ENCODE measurements at regions of chr12 and their contacts with region 1.

Region 1: GRCh38 chr12:48924617-48925303 is 532 bp downstream of the FKBP11 start:
- DNase-seq: peak; percentile 40 to 70 (median 59)
- H3K4me3 ChIP-seq: peak overlapping the region; percentile 59
- H3K27ac ChIP-seq: no peak overlapping the region
- H3K4me1 ChIP-seq: peaks cover 4% of the 10 kb centered on the region
- H3K27me3 ChIP-seq: no peaks in the 10 kb centered on the region
- CTCF ChIP-seq: peak in 2 of 3 donors; percentile 40 to 43
- EP300 ChIP-seq: no peak
- POLR2A ChIP-seq: no peak

Region 2: GRCh38 chr12:48988030-48988649 is 63.4 kb after region 1 on chr12:
- intact Hi-C with region 1: loop called in 1 of 4 experiments (anchors 10 kb)
- DNase-seq: peak in 2 of 5 donors; percentile 45 to 62
- H3K4me3 ChIP-seq: no peak overlapping the region
- H3K27ac ChIP-seq: no peak overlapping the region
- H3K4me1 ChIP-seq: no peaks in the 10 kb centered on the region
- H3K27me3 ChIP-seq: no peaks in the 10 kb centered on the region
- CTCF ChIP-seq: no peak
- EP300 ChIP-seq: no peak
- POLR2A ChIP-seq: no peak

Region 3: GRCh38 chr12:49018261-49019119 is 93.7 kb after region 1 on chr12 and contains the start of gene PRKAG1:
- intact Hi-C with region 1: no loop called
- DNase-seq: peak; percentile 93 to 97 (median 95)
- H3K4me3 ChIP-seq: peak within 1 kb of the TSS; percentile 76
- H3K27ac ChIP-seq: peak within 1 kb of the TSS; percentile 54 to 66
- H3K4me1 ChIP-seq: peaks cover 2% of the 10 kb centered on the region
- H3K27me3 ChIP-seq: no peaks in the 10 kb centered on the region
- CTCF ChIP-seq: peak; percentile 8 to 40 (median 37)
- EP300 ChIP-seq: no peak
- POLR2A ChIP-seq: peak; percentile 89
- total RNA-seq, gene PRKAG1: 25.6 to 58.2 (median 35.8) TPM

Measured in ovary (tissue), 10 donors.